Activated CD4-positive, alpha-beta T cell treated with anti-CD3 and anti-CD28 coated beads for 36 hours (primary cell): ENCODE measurements at regions of chr17 and their contacts with region 1.

Region 1: GRCh38 chr17:28318759-28319660 is at the start of gene TMEM97:
- DNase-seq: peak; percentile 98
- ATAC-seq: peak; percentile 99
- H3K4me3 Mint-ChIP-seq: peak within 1 kb of the TSS; percentile 96
- H3K27ac Mint-ChIP-seq: peak within 1 kb of the TSS; percentile 88
- H3K4me1 Mint-ChIP-seq: peaks cover 30% of the 10 kb centered on the region
- H3K27me3 Mint-ChIP-seq: no peaks in the 10 kb centered on the region
- total RNA-seq, gene TMEM97: 31.0 to 49.3 TPM

Region 2: DNA sequence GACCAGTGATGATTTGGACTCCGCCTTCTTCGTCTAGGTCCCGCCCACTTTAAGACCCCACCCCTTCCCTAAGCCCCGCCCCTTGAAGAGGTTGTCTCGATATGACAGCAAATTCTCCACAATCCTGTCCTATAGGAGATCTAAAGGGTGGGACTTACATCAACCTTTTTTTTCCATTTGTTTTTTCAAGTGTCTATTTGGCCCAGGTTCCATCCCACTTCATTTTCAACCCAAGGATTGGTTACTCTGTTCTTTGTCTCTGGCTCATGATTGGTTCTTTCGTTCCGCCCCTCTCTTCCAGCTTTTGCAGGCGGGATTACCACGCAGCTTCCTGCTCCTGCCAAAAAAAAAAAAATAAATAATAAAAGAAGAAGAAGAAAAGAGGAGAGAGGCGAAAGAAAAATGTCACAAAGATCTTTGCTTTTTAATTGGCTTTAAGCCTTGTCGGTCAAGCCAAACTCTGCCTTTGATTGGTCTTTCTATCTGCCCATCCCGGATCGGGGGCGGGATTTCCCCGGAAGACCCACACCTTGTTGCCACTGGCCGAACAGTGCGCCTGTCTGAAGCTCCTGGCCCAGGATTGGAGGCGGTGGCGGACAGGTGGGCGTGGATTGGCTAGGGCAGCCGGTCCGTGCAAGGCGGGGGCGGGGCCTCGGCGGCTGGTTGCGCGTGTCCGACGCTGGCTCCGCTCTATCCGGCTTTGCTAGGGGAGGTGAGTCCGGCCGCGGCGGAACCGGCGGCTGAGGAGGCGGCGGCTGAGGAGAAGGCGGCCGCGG is 277.8 kb before region 1 on chr17:
- CTCF ChIA-PET with region 1: no interaction called
- POLR2A ChIA-PET with region 1: no interaction called
- intact Hi-C with region 1: loop called in 1 of 2 experiments (anchors 1 kb)
- DNase-seq: peak; percentile 100
- ATAC-seq: peak; percentile 96
- H3K4me3 Mint-ChIP-seq: peak overlapping the region; percentile 79
- H3K27ac Mint-ChIP-seq: peak overlapping the region; percentile 74
- H3K4me1 Mint-ChIP-seq: peaks cover 52% of the 10 kb centered on the region
- H3K27me3 Mint-ChIP-seq: no peaks in the 10 kb centered on the region

Region 3: DNA sequence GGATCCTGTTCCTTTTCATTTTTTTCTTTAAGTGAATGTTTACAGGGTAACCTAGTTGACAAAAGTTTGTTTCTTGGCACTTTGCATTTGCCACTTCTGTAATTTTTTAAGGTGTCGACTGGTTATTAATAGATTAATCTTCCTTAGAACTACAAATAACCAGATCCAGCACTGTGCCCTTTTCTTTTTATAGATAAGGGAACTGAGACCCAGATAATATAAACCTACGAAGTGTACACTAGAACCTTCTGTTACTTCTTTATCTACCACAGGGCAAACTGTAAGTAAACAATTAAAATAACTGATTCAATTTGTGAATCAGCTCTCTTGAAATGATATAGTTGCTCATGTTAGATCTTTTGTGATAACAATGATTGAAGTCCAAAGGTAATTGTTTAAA is 221.1 kb before region 1 on chr17:
- CTCF ChIA-PET with region 1: no interaction called
- POLR2A ChIA-PET with region 1: no interaction called
- intact Hi-C with region 1: no loop called
- DNase-seq: no peak
- ATAC-seq: no peak
- H3K4me3 Mint-ChIP-seq: no peak overlapping the region
- H3K27ac Mint-ChIP-seq: no peak overlapping the region
- H3K4me1 Mint-ChIP-seq: no peaks in the 10 kb centered on the region
- H3K27me3 Mint-ChIP-seq: no peaks in the 10 kb centered on the region

Region 4: GRCh38 chr17:28193241-28193640 is 125.8 kb before region 1 on chr17:
- CTCF ChIA-PET with region 1: no interaction called
- POLR2A ChIA-PET with region 1: no interaction called
- intact Hi-C with region 1: no loop called
- DNase-seq: no peak
- ATAC-seq: no peak
- H3K4me3 Mint-ChIP-seq: no peak overlapping the region
- H3K27ac Mint-ChIP-seq: no peak overlapping the region
- H3K4me1 Mint-ChIP-seq: peaks cover 4% of the 10 kb centered on the region
- H3K27me3 Mint-ChIP-seq: no peaks in the 10 kb centered on the region

Region 5: GRCh38 chr17:28282596-28282995 is 36.4 kb before region 1 on chr17:
- CTCF ChIA-PET with region 1: no interaction called
- POLR2A ChIA-PET with region 1: no interaction called
- intact Hi-C with region 1: loop called in 1 of 2 experiments (anchors 2 kb)
- DNase-seq: no peak
- ATAC-seq: no peak
- H3K4me3 Mint-ChIP-seq: no peak overlapping the region
- H3K27ac Mint-ChIP-seq: no peak overlapping the region
- H3K4me1 Mint-ChIP-seq: peaks cover 10% of the 10 kb centered on the region
- H3K27me3 Mint-ChIP-seq: peaks cover 12% of the 10 kb centered on the region

Region 6: DNA sequence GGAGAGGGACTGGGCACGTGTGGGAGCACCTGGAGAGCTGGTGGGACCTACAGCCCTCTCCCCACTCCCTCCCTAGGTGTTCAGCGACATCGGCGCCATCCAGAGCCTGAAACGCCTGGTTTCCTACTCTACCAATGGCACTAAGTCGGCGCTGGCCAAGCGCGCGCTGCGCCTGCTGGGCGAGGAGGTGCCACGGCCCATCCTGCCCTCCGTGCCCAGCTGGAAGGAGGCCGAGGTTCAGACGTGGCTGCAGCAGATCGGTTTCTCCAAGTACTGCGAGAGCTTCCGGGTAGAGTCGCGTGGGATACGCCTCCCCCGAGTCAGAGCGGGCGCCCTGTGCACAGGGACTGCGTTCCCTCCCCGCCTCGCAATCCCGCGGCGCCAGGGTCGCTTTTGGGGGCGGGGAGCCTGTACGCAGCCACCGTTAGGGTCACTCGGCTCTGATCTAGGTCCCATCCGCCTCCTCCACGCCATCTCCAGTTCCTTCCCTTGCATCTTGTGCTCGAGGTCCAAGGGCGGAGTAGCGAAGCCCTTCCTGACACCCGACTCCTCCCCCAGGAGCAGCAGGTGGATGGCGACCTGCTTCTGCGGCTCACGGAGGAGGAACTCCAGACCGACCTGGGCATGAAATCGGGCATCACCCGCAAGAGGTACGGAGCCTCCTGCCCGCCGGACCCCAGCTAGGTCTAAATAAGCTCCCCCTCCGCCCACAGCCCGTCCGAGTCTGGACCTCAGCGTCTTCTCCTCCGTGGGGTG is 65.4 kb after region 1 on chr17:
- CTCF ChIA-PET with region 1: no interaction called
- POLR2A ChIA-PET with region 1: no interaction called
- intact Hi-C with region 1: loop called in 1 of 2 experiments (anchors 1 kb)
- DNase-seq: peak; percentile 85
- ATAC-seq: peak; percentile 93
- H3K4me3 Mint-ChIP-seq: peak overlapping the region; percentile 86
- H3K27ac Mint-ChIP-seq: peak overlapping the region; percentile 73
- H3K4me1 Mint-ChIP-seq: peaks cover 17% of the 10 kb centered on the region
- H3K27me3 Mint-ChIP-seq: peaks cover 11% of the 10 kb centered on the region

Region 7: DNA sequence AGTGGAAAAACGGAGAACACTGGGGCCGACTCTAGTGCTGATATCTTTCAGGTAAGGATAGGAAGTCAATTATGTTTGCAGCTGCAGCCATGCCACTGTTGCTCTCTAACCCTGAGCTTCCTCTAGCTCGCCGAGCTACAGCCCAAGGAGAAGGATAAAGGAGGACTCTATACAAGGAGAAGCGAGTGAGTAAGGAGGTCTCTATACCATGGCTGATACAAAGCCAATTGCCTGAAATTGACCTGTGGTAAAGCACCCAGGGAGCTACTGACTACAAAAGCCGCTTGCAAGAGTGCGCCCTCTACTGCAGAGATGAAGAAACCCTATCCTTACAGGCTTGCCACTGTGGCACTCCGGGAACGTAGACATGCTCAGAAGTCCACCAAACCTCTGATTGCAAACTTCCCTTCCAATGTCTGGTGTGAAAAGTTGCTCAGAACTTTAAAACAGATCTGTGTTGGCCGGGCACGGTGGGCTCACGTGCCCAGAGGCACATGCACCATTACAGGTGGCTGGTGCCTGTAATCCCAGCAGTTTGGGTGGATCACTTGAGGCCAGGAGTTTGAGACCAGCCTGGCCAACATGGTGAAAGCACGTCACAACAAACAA is 97.8 kb after region 1 on chr17:
- CTCF ChIA-PET with region 1: no interaction called
- POLR2A ChIA-PET with region 1: no interaction called
- intact Hi-C with region 1: no loop called
- DNase-seq: peak; percentile 75
- ATAC-seq: peak; percentile 96
- H3K4me3 Mint-ChIP-seq: no peak overlapping the region
- H3K27ac Mint-ChIP-seq: no peak overlapping the region
- H3K4me1 Mint-ChIP-seq: no peaks in the 10 kb centered on the region
- H3K27me3 Mint-ChIP-seq: peaks cover 6% of the 10 kb centered on the region

Region 8: GRCh38 chr17:29568331-29569244 is 1249.6 kb after region 1 on chr17 and contains the start of gene TP53I13:
- CTCF ChIA-PET with region 1: no interaction called
- POLR2A ChIA-PET with region 1: no interaction called
- intact Hi-C with region 1: no loop called
- DNase-seq: peak; percentile 96
- ATAC-seq: peak; percentile 64
- H3K4me3 Mint-ChIP-seq: peak within 1 kb of the TSS; percentile 97
- H3K27ac Mint-ChIP-seq: peak within 1 kb of the TSS; percentile 96
- H3K4me1 Mint-ChIP-seq: peaks cover 30% of the 10 kb centered on the region
- H3K27me3 Mint-ChIP-seq: no peaks in the 10 kb centered on the region
- total RNA-seq, gene TP53I13: 37.7 to 41.5 TPM